Sigmoid colon (tissue), 7 donors: ENCODE measurements at regions of chr17 and their contacts with region 1.

Region 1: GRCh38 chr17:60864708-60865005 is 187.0 kb downstream of the BCAS3 start:
- DNase-seq: no peak
- H3K4me3 ChIP-seq: no peak overlapping the region
- H3K27ac ChIP-seq: no peak overlapping the region
- H3K4me1 ChIP-seq: no peaks in the 10 kb centered on the region
- H3K27me3 ChIP-seq: no peaks in the 10 kb centered on the region
- CTCF ChIP-seq: no peak
- EP300 ChIP-seq: no peak
- POLR2A ChIP-seq: no peak

Region 2: DNA sequence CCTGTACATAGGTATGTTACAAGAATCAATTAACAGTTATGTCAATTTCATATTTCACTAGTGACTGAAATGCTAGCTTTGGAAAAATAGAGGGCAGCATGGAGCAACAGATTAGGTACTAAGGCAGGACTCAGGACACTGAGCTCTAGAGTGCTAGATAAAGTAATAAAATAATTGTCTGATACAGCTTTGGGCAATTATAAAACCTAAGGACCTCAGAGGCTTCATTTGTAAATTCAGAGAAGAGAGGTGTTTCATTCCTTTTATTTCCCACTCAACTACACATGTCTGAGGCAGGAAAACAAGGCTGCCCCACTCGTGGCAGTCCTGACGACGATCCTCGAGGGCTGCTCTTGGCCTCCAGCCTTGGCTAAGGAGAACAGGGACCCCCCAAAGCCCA is 633.4 kb before region 1 on chr17:
- intact Hi-C with region 1: no loop called
- DNase-seq: no peak
- H3K4me3 ChIP-seq: no peak overlapping the region
- H3K27ac ChIP-seq: no peak overlapping the region
- H3K4me1 ChIP-seq: no peaks in the 10 kb centered on the region
- H3K27me3 ChIP-seq: no peaks in the 10 kb centered on the region
- CTCF ChIP-seq: peak in 1 of 4 experiments; percentile 14
- EP300 ChIP-seq: no peak
- POLR2A ChIP-seq: peak in 1 of 2 donors; percentile 10

Region 3: GRCh38 chr17:60916043-60916442 is 51.4 kb after region 1 on chr17:
- intact Hi-C with region 1: loop called (anchors 5 kb)
- DNase-seq: no peak
- H3K4me3 ChIP-seq: no peak overlapping the region
- H3K27ac ChIP-seq: no peak overlapping the region
- H3K4me1 ChIP-seq: no peaks in the 10 kb centered on the region
- H3K27me3 ChIP-seq: no peaks in the 10 kb centered on the region
- CTCF ChIP-seq: no peak
- EP300 ChIP-seq: no peak
- POLR2A ChIP-seq: no peak

Region 4: GRCh38 chr17:60971515-60972369 is 107.1 kb after region 1 on chr17:
- intact Hi-C with region 1: no loop called
- DNase-seq: no peak
- H3K4me3 ChIP-seq: no peak overlapping the region
- H3K27ac ChIP-seq: no peak overlapping the region
- H3K4me1 ChIP-seq: no peaks in the 10 kb centered on the region
- H3K27me3 ChIP-seq: no peaks in the 10 kb centered on the region
- CTCF ChIP-seq: peak in 2 of 4 experiments; percentile 9 to 28
- EP300 ChIP-seq: no peak
- POLR2A ChIP-seq: no peak